ENCODE measurements at regions of chr12 and their contacts with region 1.

Region 1: DNA sequence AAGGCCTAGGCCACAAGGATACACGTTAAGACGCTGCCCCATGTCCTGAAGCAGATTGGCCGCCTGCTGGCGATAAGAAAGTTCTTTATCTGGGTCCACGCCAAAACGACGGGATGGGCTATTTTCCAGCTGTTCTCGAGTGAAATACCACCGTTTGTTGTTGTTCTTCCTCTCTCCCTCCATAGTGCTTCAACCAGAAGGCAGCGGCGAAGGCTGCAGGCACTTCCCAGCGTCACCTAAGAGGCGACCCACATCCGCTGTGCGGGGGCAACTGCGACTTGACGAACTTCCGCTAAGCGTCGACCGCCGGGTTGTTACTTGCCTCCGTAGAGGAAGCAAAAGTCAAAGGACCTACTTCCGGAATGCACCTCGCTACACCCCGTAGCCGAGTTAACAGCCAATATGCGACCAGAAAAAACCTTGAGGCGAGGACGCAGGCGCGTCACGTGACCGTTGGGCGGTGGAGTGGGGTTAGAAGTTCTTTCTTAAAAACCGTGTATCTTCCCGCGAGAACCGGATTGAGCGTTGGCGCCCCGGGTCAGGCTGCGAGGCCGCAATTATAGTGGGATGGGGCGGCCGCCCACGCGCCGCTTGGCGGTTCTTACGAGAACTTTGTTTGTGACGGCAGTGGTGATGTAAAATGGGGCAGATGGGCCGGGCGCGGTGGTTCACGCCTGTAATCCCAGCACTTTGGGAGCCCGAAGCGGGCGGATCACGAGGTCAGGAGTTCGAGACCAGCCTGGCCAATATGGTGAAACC is at the start of gene CCNT1:
- DNase-seq: peak; percentile 100
- H3K4me3 ChIP-seq: peak within 1 kb of the TSS; percentile 64 to 78 (median 70)
- H3K27ac ChIP-seq: peak within 1 kb of the TSS; percentile 92 to 98 (median 98)
- H3K4me1 ChIP-seq: peaks cover 29 to 54% (median 46%) of the 10 kb centered on the region in 6 donors
- H3K27me3 ChIP-seq: no peaks in the 10 kb centered on the region
- CTCF ChIP-seq: peak in 8 of 11 experiments; percentile 14 to 54 (median 42)
- POLR2A ChIP-seq: peak; percentile 36 to 91 (median 76)
- total RNA-seq, gene CCNT1: 30.3 to 53.4 (median 40.9) TPM

Region 2: GRCh38 chr12:48681738-48682532 is 34.7 kb before region 1 on chr12 and contains the start of gene KANSL2:
- intact Hi-C with region 1: loop called (anchors 2 kb)
- DNase-seq: peak; percentile 99
- H3K4me3 ChIP-seq: peak within 1 kb of the TSS; percentile 72 to 98 (median 87)
- H3K27ac ChIP-seq: peak within 1 kb of the TSS; percentile 93 to 98 (median 95)
- H3K4me1 ChIP-seq: peaks cover 39 to 56% (median 52%) of the 10 kb centered on the region in 6 donors
- H3K27me3 ChIP-seq: no peaks in the 10 kb centered on the region
- CTCF ChIP-seq: peak in 2 of 11 experiments; percentile 14 to 30
- POLR2A ChIP-seq: peak; percentile 80 to 98 (median 93)
- total RNA-seq, gene KANSL2: 28.4 to 50.7 (median 31.6) TPM